ENCODE measurements at regions of chr3 and their contacts with region 1.

Region 1: DNA sequence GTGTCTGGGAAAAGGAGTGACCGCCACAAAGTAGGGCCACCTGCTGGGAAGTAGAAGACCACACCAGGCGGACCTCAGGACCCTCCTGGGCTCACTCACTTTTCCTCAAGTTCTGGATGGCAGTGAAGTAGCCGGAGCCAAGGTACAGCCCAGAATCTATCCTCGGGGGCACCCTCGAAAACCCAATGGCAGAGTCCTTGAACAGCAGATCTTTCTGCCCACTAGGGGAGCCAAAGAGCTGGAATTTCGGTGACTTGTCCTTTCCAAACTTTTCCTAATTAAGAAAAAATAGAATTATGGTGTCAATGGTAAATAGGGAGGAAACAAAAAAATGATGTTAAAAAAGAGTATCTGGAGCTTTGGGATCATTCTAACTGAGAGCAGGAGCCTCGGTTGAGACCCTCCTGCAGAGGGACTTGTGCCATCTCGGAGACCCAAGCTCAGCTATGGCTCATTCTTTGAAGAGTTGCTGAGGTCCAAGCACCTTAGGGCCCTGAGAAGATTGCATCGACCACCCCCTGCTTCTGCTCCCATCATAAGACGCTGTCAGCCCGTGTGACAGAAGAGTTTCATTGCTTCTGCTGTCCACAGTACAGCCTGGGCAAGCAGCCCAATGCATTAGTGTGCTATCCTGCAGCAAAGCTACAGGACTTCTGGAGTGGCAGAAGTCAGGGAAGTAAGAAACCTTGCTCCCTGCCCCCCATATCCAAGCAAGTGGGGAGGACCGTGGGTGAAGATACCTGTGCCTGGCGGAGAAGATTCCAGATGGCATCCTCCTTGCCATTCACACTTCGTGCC is 14.8 kb downstream of the LTF start:
- DNase-seq: peak; percentile 9
- ATAC-seq: no peak
- H3K4me3 Mint-ChIP-seq: no peak overlapping the region
- H3K27ac Mint-ChIP-seq: no peak overlapping the region
- H3K4me1 Mint-ChIP-seq: no peaks in the 10 kb centered on the region
- H3K27me3 Mint-ChIP-seq: peaks cover 2% of the 10 kb centered on the region
- CTCF ChIP-seq: peak; percentile 71

Region 2: GRCh38 chr3:46469680-46470357 is 19.9 kb after region 1 on chr3:
- CTCF ChIA-PET with region 1: interaction called, 13 read pairs
- POLR2A ChIA-PET with region 1: no interaction called
- intact Hi-C with region 1: no loop called
- DNase-seq: no peak
- ATAC-seq: no peak
- H3K4me3 Mint-ChIP-seq: no peak overlapping the region
- H3K27ac Mint-ChIP-seq: no peak overlapping the region
- H3K4me1 Mint-ChIP-seq: no peaks in the 10 kb centered on the region
- H3K27me3 Mint-ChIP-seq: peaks cover 17% of the 10 kb centered on the region
- CTCF ChIP-seq: no peak

Measured in activated CD8-positive, alpha-beta T cell treated with anti-CD3 and anti-CD28 coated beads for 36 hours (primary cell).